Activated T-helper 2 cell treated with anti-CD3 and anti-CD28 coated beads, Interferon-gamma antibody, Interleukin-2, Interleukin-4, amounts not matched to agents 10 μg/mL and 5 μg/mL and 100 μg/mL, durations not matched to agents 14 hours and 24 hours and 36 hours (primary cell): ENCODE measurements at regions of chr20 and their contacts with region 1.

Region 1: GRCh38 chr20:51715163-51715860 is 52.9 kb downstream of the ATP9A start:
- DNase-seq: no peak
- H3K4me3 Mint-ChIP-seq: peak overlapping the region; percentile 30
- H3K27ac Mint-ChIP-seq: peak overlapping the region; percentile 90
- H3K4me1 Mint-ChIP-seq: peaks cover 33% of the 10 kb centered on the region
- H3K27me3 Mint-ChIP-seq: peaks cover 7% of the 10 kb centered on the region

Region 2: DNA sequence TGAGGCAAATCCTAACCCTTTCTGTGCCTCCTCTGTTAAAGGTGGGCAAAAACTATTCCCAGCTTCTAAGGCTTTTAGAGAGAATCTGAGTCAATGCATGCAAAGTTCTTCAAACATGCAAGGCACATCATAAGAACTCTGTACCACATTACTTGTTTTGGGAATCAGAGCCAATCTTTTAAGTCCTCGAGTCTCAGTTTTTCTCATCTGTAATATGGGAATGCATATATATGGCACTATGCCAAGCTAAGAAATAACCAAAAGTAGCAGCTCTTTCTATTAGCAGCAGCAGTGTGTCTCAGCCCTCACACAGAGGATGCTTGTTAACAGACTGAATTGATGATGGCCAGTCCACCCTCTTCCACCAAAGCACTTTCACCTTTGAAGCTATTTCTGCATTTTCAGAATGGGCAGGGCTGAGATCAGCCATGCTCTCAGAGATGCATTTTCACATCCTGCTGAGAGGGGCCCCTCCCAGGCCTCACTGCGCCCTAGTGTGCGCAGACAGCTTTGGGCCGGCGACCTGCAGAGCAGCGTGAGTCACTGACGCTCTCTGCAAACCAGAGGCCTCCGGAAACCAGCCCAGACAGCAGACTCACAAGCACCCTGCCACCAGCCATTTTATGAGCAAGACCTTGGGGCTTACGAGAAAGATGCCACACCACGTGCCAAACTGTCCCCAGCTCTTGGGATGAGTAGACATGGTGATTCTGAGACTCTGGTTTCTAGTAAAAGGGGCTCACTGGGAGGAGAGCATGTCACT is 310.8 kb before region 1 on chr20:
- intact Hi-C with region 1: loop called (anchors 5 kb)
- DNase-seq: peak; percentile 84
- H3K4me3 Mint-ChIP-seq: peak overlapping the region; percentile 28
- H3K27ac Mint-ChIP-seq: peak overlapping the region; percentile 95
- H3K4me1 Mint-ChIP-seq: peaks cover 88% of the 10 kb centered on the region
- H3K27me3 Mint-ChIP-seq: no peaks in the 10 kb centered on the region

Region 3: DNA sequence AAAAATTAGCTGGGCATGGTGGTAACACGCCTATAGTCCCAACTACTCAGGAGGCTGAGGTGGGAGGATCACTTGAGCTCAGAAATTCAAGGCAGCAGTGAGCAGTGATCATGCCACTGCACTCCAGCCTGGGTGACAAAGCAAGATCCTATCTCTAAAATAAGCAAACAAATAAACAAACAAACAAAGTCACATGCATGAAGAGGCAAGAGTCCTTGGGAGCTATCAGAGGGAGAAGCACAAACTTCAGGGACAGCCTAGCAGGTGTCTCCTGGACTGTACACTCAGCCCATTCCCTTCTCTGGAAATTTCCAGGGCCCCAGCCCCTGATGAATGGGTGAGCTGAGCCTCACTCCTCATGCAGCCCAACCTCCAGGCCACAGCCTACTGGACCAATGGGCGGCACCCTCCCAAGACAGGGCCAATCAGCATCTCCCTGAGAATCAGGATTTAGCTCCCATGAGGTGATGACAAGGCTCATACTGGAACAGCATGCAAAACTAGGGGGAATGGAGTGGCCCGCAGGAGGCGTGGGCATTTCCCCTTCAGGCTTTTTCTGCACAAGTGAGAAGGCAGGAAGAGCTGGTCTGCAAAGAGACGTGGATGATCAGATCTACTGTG is 201.9 kb before region 1 on chr20:
- intact Hi-C with region 1: no loop called
- DNase-seq: no peak
- H3K4me3 Mint-ChIP-seq: no peak overlapping the region
- H3K27ac Mint-ChIP-seq: peak overlapping the region; percentile 64
- H3K4me1 Mint-ChIP-seq: peaks cover 71% of the 10 kb centered on the region
- H3K27me3 Mint-ChIP-seq: no peaks in the 10 kb centered on the region

Region 4: DNA sequence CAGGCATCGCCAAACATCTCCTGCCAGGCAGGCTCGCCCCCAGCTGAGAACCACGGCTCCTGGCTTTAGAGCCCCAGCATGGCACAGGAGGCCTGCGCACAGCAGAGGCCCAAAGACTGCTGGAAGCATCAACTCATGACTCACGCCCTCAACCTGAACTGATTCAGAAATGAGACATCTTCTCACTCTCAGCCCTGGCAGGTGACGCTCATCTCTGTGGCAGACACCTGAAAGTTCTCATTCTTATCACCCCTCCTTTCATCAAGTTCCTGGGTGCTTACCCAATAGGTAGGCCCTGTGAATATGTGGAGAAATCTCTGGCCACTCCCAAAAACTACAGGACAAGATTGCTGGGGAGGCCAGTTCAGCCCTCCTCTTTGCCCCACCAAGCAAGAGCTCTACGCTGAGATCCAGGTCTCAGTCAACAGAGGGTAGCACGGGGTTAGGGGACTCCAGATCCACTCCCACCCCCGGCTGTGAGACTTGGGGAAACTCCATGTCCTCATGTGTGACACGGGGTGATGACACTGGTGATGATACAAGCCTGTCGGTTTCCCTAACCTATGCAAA is 184.1 kb before region 1 on chr20:
- intact Hi-C with region 1: loop called (anchors 5 kb)
- DNase-seq: peak; percentile 44
- H3K4me3 Mint-ChIP-seq: peak overlapping the region; percentile 82
- H3K27ac Mint-ChIP-seq: peak overlapping the region; percentile 99
- H3K4me1 Mint-ChIP-seq: peaks cover 84% of the 10 kb centered on the region
- H3K27me3 Mint-ChIP-seq: no peaks in the 10 kb centered on the region

Region 5: GRCh38 chr20:51661609-51662178 is 53.6 kb before region 1 on chr20:
- intact Hi-C with region 1: loop called (anchors 1 kb)
- DNase-seq: peak; percentile 32
- H3K4me3 Mint-ChIP-seq: no peak overlapping the region
- H3K27ac Mint-ChIP-seq: peak overlapping the region; percentile 20
- H3K4me1 Mint-ChIP-seq: peaks cover 23% of the 10 kb centered on the region
- H3K27me3 Mint-ChIP-seq: peaks cover 4% of the 10 kb centered on the region

Region 6: GRCh38 chr20:51703400-51704287 is 11.7 kb before region 1 on chr20:
- intact Hi-C with region 1: loop called (anchors 1 kb)
- DNase-seq: no peak
- H3K4me3 Mint-ChIP-seq: no peak overlapping the region
- H3K27ac Mint-ChIP-seq: peak overlapping the region; percentile 39
- H3K4me1 Mint-ChIP-seq: peaks cover 24% of the 10 kb centered on the region
- H3K27me3 Mint-ChIP-seq: peaks cover 14% of the 10 kb centered on the region

Region 7: DNA sequence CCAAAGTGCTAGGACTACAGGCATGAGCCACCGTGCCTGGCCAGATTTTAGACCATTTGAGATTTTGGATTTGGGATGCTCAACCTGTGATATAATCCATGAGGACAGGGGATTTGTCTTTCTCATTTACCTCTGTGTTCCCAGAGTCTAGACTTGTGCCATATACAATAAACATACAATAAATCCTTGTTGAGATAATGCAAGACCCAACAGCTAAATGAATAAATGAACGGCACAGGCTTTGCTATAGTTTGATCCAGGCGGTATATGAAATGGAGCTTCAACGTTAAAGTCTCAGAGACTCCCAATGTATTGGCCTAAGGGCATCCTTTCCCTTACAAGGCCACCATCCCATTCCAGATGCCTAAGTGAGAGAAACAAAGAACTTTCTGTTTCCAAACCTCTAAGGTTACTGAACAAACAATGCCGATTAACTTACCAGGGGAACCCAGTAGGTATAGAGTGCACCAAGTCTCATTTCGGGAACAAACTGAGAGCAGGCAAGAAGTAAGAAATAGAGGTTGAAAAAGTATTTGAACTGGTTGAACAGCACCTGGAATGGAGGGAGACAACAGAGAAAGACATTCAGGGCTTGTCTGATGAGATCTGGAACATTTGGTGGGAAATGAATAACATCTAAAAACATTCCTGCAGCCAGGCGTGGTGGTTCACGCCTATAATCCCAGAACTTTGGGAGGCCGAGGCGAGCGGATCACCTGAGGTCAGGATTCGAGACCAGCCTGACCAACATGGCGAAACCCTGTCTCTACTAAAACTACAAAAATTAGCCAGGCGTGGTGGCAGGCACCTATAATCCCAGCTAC is 10.3 kb after region 1 on chr20:
- intact Hi-C with region 1: no loop called
- DNase-seq: no peak
- H3K4me3 Mint-ChIP-seq: no peak overlapping the region
- H3K27ac Mint-ChIP-seq: no peak overlapping the region
- H3K4me1 Mint-ChIP-seq: peaks cover 16% of the 10 kb centered on the region
- H3K27me3 Mint-ChIP-seq: peaks cover 3% of the 10 kb centered on the region

Region 8: GRCh38 chr20:51767010-51767558 is 51.8 kb after region 1 on chr20:
- intact Hi-C with region 1: loop called (anchors 1 kb)
- DNase-seq: peak; percentile 44
- H3K4me3 Mint-ChIP-seq: peak overlapping the region; percentile 65
- H3K27ac Mint-ChIP-seq: no peak overlapping the region
- H3K4me1 Mint-ChIP-seq: peaks cover 7% of the 10 kb centered on the region
- H3K27me3 Mint-ChIP-seq: peaks cover 32% of the 10 kb centered on the region

Region 9: DNA sequence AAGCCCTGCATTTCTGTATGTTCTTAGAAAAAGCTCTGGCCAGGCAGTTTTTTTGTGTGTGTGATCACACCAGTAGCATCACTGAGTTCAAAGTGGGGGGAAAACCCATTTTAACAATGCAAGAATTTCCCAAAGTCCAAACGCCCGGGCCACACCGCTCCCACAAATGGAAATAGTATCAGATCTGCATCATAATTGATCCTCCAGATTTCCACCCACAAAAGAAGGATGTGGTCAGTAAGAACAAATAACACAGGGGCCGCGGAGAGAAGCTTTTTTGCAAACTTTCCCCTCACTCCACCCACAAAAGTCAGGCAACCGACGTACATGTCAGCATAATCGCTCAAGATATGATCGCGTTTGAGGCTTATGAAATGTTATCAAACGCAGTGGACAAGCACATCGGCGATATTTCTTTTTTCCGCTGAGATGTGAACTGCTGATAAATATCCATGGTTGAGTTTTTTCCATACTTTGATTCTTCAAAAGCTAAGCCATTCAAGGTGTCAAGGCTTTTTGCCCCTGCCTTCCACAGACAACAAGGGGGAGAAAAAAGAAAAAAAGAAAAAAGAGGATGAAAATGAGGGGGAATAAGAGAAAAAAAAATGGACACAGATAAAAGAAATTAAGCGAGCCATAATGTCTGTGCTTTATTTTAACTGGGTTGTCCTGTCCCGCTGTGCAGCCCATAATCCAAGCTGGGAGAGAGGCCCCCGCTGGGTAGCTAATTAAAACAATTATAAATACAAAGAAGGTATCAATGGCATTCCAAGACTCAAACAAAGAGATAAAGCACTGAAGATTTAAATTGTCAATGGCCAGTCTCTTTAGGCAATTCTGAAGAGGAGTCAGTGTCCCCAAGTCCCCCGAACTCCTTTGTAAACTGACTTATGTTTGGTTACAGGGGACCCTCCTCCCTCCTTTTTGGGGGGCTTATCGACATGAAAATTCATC is 332.8 kb after region 1 on chr20:
- intact Hi-C with region 1: loop called (anchors 5 kb)
- DNase-seq: peak; percentile 24
- H3K4me3 Mint-ChIP-seq: peak overlapping the region; percentile 44
- H3K27ac Mint-ChIP-seq: peak overlapping the region; percentile 89
- H3K4me1 Mint-ChIP-seq: peaks cover 35% of the 10 kb centered on the region
- H3K27me3 Mint-ChIP-seq: peaks cover 3% of the 10 kb centered on the region